Mammary epithelial cell (primary cell): ENCODE measurements at regions of chr6 and their contacts with region 1.

Region 1: DNA sequence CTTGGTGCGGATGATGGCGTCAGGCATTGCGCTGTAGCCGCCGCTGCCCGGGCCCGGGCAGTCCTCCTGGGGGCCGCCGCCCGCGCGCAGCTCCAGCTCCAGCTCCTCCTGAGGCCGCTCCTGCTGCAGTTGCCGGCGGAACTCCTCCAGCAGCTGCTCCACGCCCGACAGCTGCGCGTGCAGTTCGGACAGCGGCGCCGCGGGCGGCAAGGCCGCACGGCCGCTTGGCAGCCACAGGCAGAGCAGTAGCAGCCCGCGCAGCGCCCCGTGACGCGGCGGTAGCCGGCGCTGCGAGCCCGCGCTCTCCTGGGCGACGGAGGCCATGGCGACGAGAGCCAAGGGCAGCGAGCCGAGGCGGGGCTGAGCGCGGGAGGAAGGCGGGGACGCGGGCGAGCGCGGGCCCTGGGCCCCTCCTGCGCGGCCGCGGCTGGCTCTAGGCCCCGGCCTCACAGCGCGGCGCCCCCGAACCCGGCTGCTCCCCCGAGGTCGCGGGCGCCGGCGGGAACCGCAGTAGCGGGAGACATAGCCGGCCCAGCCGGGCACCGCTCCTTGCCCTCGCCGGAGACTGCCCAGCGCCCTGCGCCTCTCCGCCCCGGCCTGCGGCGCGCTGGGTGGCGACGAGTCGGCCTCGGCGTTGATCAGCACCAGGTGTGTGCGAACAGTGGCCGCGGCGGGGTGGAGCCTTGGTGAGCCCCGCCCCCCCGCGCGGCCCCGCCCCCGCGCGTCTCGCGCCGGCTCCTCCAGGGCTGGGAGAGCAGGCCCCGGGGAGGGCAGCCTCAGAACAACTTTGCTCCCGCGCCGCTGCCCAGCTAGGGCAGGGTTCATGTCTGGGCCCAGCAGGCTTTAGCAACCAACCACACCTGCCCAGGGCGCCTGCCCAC is at the start of gene LRP11:
- DNase-seq: peak; percentile 86
- H3K4me3 ChIP-seq: peak within 1 kb of the TSS; percentile 39 to 69 (median 57)
- H3K27ac ChIP-seq: peak within 1 kb of the TSS; percentile 87
- H3K4me1 ChIP-seq: peaks cover 31% of the 10 kb centered on the region
- H3K27me3 ChIP-seq: no peaks in the 10 kb centered on the region
- CTCF ChIP-seq: no peak
- total RNA-seq, gene LRP11: 67.5 to 71.3 TPM

Region 2: GRCh38 chr6:149723771-149724417 is 140.0 kb before region 1 on chr6:
- CTCF ChIA-PET with region 1: no interaction called
- dilution Hi-C with region 1: no loop called
- in situ Hi-C with region 1: no loop called
- intact Hi-C with region 1: loop called (anchors 2 kb)
- DNase-seq: peak; percentile 74
- H3K4me3 ChIP-seq: no peak overlapping the region
- H3K27ac ChIP-seq: no peak overlapping the region
- H3K4me1 ChIP-seq: no peaks in the 10 kb centered on the region
- H3K27me3 ChIP-seq: no peaks in the 10 kb centered on the region
- CTCF ChIP-seq: peak; percentile 89 to 92

Region 3: GRCh38 chr6:149840345-149841075 is 23.4 kb before region 1 on chr6:
- CTCF ChIA-PET with region 1: no interaction called
- dilution Hi-C with region 1: no loop called
- in situ Hi-C with region 1: no loop called
- intact Hi-C with region 1: loop called (anchors 1 kb)
- DNase-seq: peak; percentile 70
- H3K4me3 ChIP-seq: no peak overlapping the region
- H3K27ac ChIP-seq: no peak overlapping the region
- H3K4me1 ChIP-seq: peaks cover 15% of the 10 kb centered on the region
- H3K27me3 ChIP-seq: no peaks in the 10 kb centered on the region
- CTCF ChIP-seq: peak; percentile 73 to 89

Region 4: DNA sequence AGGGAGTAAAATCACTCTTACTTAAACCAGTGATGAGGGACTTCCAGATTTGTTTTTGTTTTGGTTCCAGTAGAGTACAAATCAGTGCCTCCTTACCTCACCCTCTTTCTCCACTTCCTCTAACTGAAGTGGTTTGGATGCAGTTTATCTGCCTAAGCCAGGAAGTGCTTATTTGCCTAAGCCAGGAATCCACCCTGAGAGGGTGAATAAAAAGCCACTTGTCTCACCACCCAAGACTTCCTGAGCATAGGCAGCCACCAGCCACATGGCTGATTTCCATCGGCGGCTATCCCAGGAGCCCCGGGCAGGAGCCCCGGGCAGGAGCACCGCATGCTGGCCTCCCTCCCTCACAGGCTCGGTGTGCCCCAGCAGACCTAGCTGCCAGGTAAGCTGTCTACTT is 11.8 kb before region 1 on chr6:
- CTCF ChIA-PET with region 1: no interaction called
- dilution Hi-C with region 1: no loop called
- in situ Hi-C with region 1: no loop called
- intact Hi-C with region 1: loop called (anchors 1 kb)
- DNase-seq: peak; percentile 77
- H3K4me3 ChIP-seq: no peak overlapping the region
- H3K27ac ChIP-seq: peak overlapping the region; percentile 64
- H3K4me1 ChIP-seq: peaks cover 59% of the 10 kb centered on the region
- H3K27me3 ChIP-seq: no peaks in the 10 kb centered on the region
- CTCF ChIP-seq: no peak

Region 5: DNA sequence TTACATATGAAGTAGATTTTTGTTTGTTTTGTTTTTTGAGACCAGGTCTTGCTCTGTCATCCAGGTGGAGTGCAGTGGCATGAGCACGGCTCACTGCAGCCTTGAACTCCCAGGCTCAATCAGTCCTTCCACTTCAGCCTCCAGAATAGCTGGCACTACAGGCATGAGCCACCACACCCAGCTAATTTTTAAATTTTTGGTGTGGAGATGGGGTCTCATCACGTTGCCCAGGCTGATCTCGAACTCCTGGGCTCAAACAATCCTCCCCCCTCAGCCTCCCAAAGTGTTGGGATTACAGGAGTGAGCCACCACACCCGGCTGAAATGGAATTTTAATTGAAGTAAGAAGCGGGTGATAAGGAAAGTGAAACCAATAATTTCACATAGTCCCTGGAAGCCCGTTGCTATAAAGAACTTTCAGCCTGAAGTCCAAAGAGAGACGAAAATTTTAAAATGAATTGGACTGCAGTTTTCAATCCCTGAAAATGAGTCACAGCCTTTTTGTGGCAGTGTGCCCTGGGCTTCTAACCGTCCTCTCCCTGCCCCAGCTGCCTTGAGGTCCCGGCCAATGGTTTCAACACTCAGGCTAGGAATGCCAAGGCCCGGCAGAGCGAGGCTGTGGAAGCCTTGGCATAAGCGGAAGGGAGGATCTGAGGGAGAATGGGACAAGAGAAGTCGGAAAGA is 33.2 kb after region 1 on chr6:
- CTCF ChIA-PET with region 1: no interaction called
- dilution Hi-C with region 1: loop called (anchors 10 kb)
- in situ Hi-C with region 1: no loop called
- intact Hi-C with region 1: loop called (anchors 2 kb)
- DNase-seq: peak; percentile 80
- H3K4me3 ChIP-seq: peak overlapping the region in 2 of 3 experiments; percentile 14 to 19
- H3K27ac ChIP-seq: peak overlapping the region; percentile 71
- H3K4me1 ChIP-seq: peaks cover 67% of the 10 kb centered on the region
- H3K27me3 ChIP-seq: no peaks in the 10 kb centered on the region
- CTCF ChIP-seq: no peak